ENCODE measurements at regions of chr18 and their contacts with region 1.

Region 1: GRCh38 chr18:62131301-62131909 is 55.5 kb downstream of the PIGN start:
- DNase-seq: no peak
- H3K4me3 ChIP-seq: no peak overlapping the region
- CTCF ChIP-seq: peak; percentile 71

Region 2: GRCh38 chr18:61551586-61551985 is 579.8 kb before region 1 on chr18:
- CTCF ChIA-PET with region 1: interaction called, 26 read pairs
- POLR2A ChIA-PET with region 1: no interaction called
- DNase-seq: peak; percentile 62
- H3K4me3 ChIP-seq: no peak overlapping the region
- CTCF ChIP-seq: peak; percentile 86

Region 3: DNA sequence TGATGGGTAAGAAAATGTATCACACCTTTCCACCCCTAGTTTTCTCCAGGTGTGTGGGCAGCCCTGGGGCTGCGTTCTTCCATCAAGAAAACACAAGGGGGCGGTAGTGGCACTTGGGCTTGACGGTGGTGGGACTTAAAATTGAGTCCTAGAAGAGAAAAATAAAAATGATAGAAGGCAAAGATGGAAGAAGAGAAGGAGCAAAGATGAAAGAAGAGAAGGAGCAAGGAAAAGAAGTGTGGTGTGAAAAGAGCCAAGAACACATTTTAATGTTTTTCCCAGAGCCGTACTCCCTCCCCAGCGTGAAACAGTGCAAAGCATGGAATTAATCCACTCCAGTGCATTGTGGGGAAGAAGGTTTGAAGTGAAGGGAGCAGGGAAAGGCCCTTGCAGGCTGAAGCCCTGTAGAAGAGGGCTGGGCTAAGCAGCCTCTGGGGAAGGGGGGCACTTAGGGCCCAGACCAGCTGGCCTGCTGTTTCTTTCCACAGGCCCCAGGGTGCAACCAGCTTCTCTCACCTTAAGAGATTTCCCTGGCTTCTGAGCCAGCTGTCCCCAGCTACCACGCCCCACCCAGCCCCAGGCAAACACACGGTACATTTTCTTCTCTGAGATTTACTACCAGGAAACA is 495.4 kb before region 1 on chr18:
- CTCF ChIA-PET with region 1: interaction called, 66 read pairs
- POLR2A ChIA-PET with region 1: no interaction called
- DNase-seq: peak; percentile 16
- H3K4me3 ChIP-seq: no peak overlapping the region
- CTCF ChIP-seq: peak; percentile 79

Region 4: GRCh38 chr18:61901323-61901986 is 229.9 kb before region 1 on chr18:
- CTCF ChIA-PET with region 1: interaction called, 10 read pairs
- POLR2A ChIA-PET with region 1: no interaction called
- DNase-seq: no peak
- H3K4me3 ChIP-seq: no peak overlapping the region
- CTCF ChIP-seq: peak; percentile 93

Region 5: GRCh38 chr18:62144338-62144737 is 12.9 kb after region 1 on chr18:
- CTCF ChIA-PET with region 1: interaction called, 13 read pairs
- POLR2A ChIA-PET with region 1: no interaction called
- DNase-seq: no peak
- H3K4me3 ChIP-seq: no peak overlapping the region
- CTCF ChIP-seq: no peak

Region 6: GRCh38 chr18:62214790-62215189 is 83.4 kb after region 1 on chr18:
- CTCF ChIA-PET with region 1: no interaction called
- POLR2A ChIA-PET with region 1: no interaction called
- DNase-seq: no peak
- H3K4me3 ChIP-seq: no peak overlapping the region
- CTCF ChIP-seq: no peak